Left ventricle myocardium inferior (tissue), 1 donor: ENCODE measurements at regions of chr10 and their contacts with region 1.

Region 1: GRCh38 chr10:61943674-61944410 is 42.3 kb downstream of the ARID5B start:
- DNase-seq: no peak
- H3K4me3 ChIP-seq: peak overlapping the region; percentile 36
- H3K27ac ChIP-seq: peak overlapping the region; percentile 70
- H3K4me1 ChIP-seq: peaks cover 24% of the 10 kb centered on the region
- H3K27me3 ChIP-seq: no peaks in the 10 kb centered on the region
- CTCF ChIP-seq: peak; percentile 35

Region 2: GRCh38 chr10:60944159-60944909 is 999.5 kb before region 1 on chr10 and contains the start of gene RHOBTB1:
- intact Hi-C with region 1: loop called (anchors 10 kb)
- DNase-seq: peak; percentile 81
- H3K4me3 ChIP-seq: peak within 1 kb of the TSS; percentile 94
- H3K27ac ChIP-seq: peak within 1 kb of the TSS; percentile 99
- H3K4me1 ChIP-seq: peaks cover 53% of the 10 kb centered on the region
- H3K27me3 ChIP-seq: no peaks in the 10 kb centered on the region
- CTCF ChIP-seq: no peak
- total RNA-seq, gene RHOBTB1: 16.6 TPM

Region 3: GRCh38 chr10:61992671-61993668 is 49.1 kb after region 1 on chr10:
- intact Hi-C with region 1: no loop called
- DNase-seq: peak; percentile 23
- H3K4me3 ChIP-seq: peak overlapping the region; percentile 45
- H3K27ac ChIP-seq: peak overlapping the region; percentile 75
- H3K4me1 ChIP-seq: peaks cover 38% of the 10 kb centered on the region
- H3K27me3 ChIP-seq: no peaks in the 10 kb centered on the region
- CTCF ChIP-seq: no peak